A549 (cell line): ENCODE measurements at regions of chr1 and their contacts with region 1.

Region 1: DNA sequence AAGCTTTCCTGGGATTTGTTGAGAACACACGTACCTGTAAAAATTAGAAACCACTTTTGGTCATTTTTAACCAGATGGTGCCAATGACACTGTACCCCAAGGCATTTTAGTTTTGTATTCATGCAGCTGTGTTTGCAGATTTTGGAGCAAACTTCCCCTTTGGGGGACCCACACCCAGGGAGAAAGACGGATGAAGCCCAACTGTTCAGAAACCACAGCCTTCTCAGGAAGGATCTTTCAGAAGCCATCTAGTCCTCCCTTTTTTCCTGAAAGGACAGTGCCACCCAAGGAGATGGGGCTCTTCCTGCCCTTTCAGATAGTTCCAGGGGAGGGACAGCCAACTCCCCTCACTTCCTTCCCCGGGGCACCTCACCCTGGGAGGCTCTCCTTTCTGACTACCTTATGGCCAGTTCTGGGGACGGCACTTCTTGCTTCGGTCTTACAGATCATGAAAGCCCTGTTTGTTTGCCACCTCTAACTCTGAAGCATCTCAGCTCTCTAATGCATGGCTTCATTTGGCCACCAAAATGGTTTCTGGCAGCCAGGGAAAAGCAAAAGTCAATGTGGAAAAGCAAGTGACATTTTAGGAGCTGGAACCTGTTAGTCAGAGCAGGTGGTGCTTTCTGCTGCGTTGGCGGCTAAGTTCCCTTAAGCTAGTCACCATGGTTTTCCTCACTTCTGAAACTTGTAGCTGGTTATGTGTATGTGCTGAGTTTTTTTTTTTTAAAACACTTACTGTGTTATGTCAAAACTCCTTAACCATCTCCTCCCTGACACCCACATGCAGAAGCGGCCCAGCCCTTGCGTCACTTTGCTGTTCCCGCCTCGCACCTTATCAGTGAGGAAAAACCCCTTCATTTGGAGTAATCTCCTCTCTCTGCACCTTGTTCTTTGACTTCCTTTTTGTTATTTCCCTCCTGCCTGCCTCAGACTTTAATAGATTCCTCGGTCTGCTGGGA is 10.1 kb downstream of the TMCC2 start:
- DNase-seq: no peak
- ATAC-seq: no peak
- H3K4me3 ChIP-seq: no peak overlapping the region
- H3K27ac ChIP-seq: no peak overlapping the region
- H3K4me1 ChIP-seq: no peaks in the 10 kb centered on the region
- CTCF ChIP-seq: no peak
- EP300 ChIP-seq: no peak
- POLR2A ChIP-seq: no peak
- RAD21 ChIP-seq: no peak

Region 2: DNA sequence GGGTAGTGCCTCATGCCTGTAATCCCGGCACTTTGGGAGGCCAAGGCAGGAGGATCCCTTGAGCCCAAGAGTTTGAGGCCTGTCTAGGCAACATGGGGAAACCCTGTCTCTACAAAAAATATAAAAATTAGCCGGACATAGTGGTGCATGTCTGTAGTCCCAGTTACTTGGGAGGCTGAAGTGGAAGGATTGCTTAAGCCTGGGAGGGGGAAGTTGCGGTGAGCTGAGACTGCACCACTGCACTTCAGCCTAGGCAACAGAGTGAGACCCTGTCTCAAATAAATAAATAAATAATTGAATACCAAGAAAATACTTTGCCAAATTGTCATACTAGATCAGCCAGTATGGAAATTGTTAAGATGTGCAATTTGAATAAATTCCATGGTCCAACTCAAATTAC is 110.2 kb before region 1 on chr1:
- CTCF ChIA-PET with region 1: no interaction called
- POLR2A ChIA-PET with region 1: no interaction called
- DNase-seq: no peak
- ATAC-seq: no peak
- H3K4me3 ChIP-seq: no peak overlapping the region
- H3K27ac ChIP-seq: no peak overlapping the region
- H3K4me1 ChIP-seq: 0 out of 3 replicates have a peak, but pooled peaks cover 3% of the 10 kb centered on the region
- CTCF ChIP-seq: no peak
- EP300 ChIP-seq: no peak
- POLR2A ChIP-seq: no peak
- RAD21 ChIP-seq: no peak

Region 3: DNA sequence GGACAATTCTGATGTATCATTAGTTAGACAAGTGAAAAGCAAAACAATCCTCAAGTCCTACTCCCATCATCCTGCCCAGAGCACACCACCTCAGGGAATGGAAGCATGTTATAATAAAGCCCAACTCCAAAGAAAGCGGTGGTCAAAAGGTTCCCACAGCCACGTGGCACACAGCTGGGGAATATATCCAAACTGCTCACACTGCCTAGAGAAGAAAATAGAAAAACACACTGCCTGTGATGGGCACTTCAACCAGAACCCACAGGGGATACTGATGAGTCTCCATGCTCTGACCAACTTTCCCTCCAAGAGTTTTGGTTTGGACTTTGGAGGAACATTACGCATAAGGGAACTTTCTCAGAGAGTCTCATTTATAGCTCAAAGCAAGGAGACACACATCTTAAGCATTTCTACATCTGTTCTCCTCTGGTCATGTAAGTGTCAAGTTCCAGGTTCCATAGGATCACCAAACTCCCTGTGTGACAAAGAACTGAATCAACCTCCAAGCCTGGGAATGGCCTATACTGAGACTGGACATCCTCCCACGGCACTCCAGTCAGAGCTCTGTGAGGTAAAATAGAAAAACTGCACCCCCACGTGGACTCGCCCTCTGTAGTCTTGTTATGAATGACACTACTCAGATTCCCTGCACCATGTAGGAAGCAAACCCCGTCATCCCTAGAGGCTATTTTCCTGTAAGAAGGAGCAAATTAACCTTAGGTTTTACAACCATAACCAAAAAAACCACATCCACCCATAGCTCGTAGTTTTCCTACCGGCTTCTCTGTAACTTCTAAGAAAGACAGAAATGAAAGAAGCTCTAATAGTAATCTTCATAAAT is 38.5 kb before region 1 on chr1:
- CTCF ChIA-PET with region 1: no interaction called
- POLR2A ChIA-PET with region 1: no interaction called
- DNase-seq: no peak
- ATAC-seq: peak in 1 of 2 experiments; percentile 42; a peak in 2 of 6 replicates
- H3K4me3 ChIP-seq: no peak overlapping the region
- H3K27ac ChIP-seq: no peak overlapping the region
- H3K4me1 ChIP-seq: peaks cover 3% of the 10 kb centered on the region; the same call in 2 of the 3 replicates
- CTCF ChIP-seq: no peak
- EP300 ChIP-seq: no peak
- POLR2A ChIP-seq: no peak
- RAD21 ChIP-seq: no peak

Region 4: DNA sequence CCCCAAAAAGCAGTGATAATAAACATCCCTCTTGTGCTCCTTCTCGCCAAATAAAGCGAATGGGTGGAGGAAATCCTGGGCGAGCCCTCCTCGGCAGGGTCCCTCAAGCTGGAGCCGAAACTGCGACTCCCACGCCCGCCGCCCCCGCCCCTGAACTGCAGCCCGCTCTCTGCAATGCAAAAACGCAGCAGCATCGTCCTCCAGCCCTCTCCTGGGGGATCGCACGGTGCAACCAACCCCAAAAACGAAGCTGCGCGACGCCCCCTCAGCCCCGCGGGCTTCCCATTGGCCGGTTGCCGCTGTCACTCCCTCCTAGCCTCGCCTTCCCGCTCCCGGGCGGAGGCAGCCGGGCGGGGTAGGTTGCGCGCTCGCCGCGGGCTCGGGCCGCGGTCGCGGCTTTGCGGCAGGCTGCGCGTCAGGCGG is 10.2 kb before region 1 on chr1 and contains the start of gene TMCC2:
- CTCF ChIA-PET with region 1: interaction called, 1,139 read pairs
- POLR2A ChIA-PET with region 1: no interaction called
- DNase-seq: peak; percentile 84 to 97
- ATAC-seq: peak; percentile 83 to 92
- H3K4me3 ChIP-seq: peak within 1 kb of the TSS; percentile 69
- H3K27ac ChIP-seq: peak within 1 kb of the TSS; percentile 64 to 88
- H3K4me1 ChIP-seq: peaks cover 12% of the 10 kb centered on the region; the same call in 2 of the 3 replicates
- CTCF ChIP-seq: no peak
- EP300 ChIP-seq: no peak
- POLR2A ChIP-seq: peak; percentile 51
- RAD21 ChIP-seq: no peak; a peak in 1 of 5 replicates
- polyA plus RNA-seq, gene TMCC2: 1.6 and 1.7 TPM in 2 replicates